ENCODE measurements at regions of chr1 and their contacts with region 1.

Region 1: GRCh38 chr1:240732390-240732789 is 120.4 kb upstream of the GREM2 start:
- DNase-seq: no peak
- ATAC-seq: peak; percentile 72

Region 2: GRCh38 chr1:240794046-240794843 is 61.9 kb after region 1 on chr1:
- intact Hi-C with region 1: no loop called
- DNase-seq: no peak
- ATAC-seq: no peak

Region 3: DNA sequence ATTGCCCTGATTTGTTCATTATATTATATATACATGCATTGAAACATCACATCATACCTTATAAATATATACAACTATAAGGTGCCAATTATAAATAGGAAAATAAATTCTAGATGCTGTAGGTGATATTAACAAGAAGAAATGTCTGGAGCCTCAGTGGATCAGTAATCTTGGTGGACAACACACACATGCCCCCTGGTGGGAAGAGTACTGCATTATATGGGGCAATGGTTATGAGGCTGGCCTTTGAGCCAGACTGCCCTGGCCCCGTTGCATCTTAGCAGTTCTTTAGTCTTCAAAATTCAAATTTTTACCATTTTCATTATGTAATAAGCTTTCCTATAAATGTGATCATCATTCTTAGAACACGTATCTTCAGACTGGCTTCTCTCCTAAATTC is 214.5 kb after region 1 on chr1:
- intact Hi-C with region 1: loop called in 1 of 2 experiments (anchors 1 kb)
- DNase-seq: peak in 1 of 2 donors; percentile 54
- ATAC-seq: peak; percentile 89

Region 4: DNA sequence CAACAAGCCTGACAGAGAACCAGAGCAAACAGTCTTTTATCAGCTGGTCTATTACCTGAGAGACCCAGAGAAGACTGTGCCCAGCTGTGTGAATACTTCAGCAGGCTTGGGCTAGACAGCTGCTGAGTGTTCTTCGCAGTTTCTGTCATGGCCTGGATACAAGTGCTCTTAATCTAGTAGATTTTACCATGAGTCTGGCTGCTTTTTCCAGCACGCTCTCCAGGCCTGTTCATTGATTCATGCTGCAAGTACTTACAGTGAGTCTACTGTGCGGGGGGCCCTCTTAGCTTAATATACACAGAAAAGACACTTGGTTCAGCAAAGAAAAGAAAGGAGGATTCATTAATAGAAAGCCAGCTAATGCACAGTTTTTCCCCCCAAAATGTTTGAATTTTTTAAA is 576.1 kb after region 1 on chr1:
- intact Hi-C with region 1: no loop called
- DNase-seq: no peak
- ATAC-seq: no peak

Measured in left colon (tissue), 2 donors.